ENCODE measurements at regions of chr16 and their contacts with region 1.

Region 1: DNA sequence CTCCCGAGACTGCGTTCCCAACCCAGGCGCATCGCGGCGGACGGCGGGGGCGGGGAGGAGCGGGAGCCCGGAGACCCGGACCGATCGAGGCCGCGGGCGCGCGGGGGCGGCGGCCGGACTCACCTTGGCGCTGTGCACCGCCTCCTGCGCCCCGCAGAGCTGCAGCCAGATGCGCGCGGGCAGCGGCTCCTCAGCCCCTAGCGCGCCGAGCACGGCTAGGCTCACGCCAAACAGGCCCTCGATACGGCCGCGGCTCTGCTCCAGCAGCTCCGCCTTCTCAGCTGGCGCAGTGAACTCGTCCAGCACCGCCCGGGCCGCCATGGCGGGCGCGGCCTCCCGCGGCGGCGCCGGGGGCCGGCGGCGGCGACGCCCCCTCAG is 339 bp downstream of the N4BP1 start:
- DNase-seq: peak; percentile 46
- H3K4me3 Mint-ChIP-seq: no peak overlapping the region
- H3K27ac Mint-ChIP-seq: peak overlapping the region; percentile 100
- H3K4me1 Mint-ChIP-seq: peaks cover 12% of the 10 kb centered on the region
- H3K27me3 Mint-ChIP-seq: no peaks in the 10 kb centered on the region
- CTCF ChIP-seq: no peak

Region 2: DNA sequence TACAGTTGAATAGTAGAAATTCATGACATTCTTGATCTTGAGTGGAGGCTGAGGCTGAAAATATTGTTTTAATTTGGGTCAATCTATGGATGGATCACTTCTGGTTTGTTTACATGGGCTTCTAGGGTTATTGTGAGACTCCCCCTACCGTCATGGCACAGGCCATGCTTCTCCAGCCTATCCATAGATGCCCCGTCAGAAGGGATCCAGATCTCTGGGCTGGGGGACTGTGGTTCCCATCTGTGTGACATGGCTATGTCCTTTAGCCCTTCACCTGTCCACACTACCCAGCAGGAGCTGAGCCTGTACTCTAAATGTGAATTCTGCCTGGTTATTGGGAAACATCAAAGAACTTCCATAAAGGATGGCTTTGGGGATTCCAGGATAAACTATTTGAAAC is 614.3 kb before region 1 on chr16:
- CTCF ChIA-PET with region 1: no interaction called
- POLR2A ChIA-PET with region 1: no interaction called
- intact Hi-C with region 1: no loop called
- DNase-seq: peak; percentile 5
- H3K4me3 Mint-ChIP-seq: no peak overlapping the region
- H3K27ac Mint-ChIP-seq: no peak overlapping the region
- H3K4me1 Mint-ChIP-seq: no peaks in the 10 kb centered on the region
- H3K27me3 Mint-ChIP-seq: no peaks in the 10 kb centered on the region
- CTCF ChIP-seq: no peak

Region 3: DNA sequence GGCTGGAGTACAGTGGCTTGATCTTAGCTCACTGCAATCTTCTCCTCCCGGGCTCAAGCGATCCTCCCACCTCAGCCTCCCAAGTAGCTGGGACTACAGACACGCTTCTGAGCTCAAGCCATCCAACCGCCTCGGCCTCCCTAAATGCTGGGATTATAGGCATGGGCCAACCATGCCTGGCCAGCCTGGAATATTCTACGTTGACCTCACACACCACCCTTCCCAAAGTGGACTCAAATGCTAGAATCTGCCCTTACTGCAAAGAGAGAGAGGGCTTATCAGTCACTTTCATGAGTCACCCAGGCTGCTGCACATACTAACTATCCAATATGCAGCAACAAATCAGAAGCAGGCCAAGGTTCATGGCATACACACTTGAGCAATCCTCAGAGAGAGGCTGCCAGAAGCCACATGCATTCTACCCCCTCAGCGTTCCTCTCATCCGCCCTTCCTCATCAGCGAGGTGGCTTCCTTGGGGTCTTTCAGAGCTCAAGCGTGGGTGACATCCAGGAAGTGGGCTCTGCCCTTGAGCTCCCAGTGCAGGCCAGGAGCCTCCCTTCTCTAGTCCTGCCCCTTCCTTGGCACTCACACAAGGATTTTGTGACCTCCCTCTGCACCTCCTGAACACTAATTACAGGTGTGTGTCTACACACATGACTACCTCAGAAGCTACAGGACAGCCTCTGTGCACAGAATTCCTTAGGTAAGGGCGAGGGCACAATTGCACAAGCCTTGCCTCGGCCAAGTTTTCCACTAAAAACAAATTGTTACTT is 199.6 kb before region 1 on chr16:
- CTCF ChIA-PET with region 1: no interaction called
- POLR2A ChIA-PET with region 1: interaction called, 10 read pairs
- intact Hi-C with region 1: no loop called
- DNase-seq: peak; percentile 91
- H3K4me3 Mint-ChIP-seq: peak overlapping the region; percentile 42
- H3K27ac Mint-ChIP-seq: peak overlapping the region; percentile 71
- H3K4me1 Mint-ChIP-seq: peaks cover 26% of the 10 kb centered on the region
- H3K27me3 Mint-ChIP-seq: no peaks in the 10 kb centered on the region
- CTCF ChIP-seq: no peak

Region 4: DNA sequence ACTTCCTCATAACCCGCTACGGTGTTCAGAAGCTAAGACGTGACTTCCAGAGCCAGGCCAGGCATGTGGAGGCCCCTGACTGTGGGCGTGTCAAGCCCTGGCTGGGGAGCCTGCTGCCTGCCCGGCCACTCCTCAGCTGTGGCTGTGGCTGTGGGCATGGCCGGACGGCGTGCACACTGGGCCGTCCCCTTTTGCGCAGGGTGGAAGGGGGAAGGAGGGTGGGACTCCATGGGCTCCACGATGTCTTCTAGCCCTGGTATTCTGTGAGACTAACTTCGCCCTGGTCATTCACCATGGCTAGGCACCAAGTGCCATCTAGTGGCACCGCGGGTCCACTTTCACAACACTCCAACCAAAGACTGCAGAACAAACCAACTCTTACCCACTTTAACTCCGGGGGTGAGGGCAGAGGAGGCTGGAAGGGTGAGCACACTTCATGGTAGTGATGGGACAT is 67.6 kb before region 1 on chr16:
- CTCF ChIA-PET with region 1: interaction called, 9 read pairs
- POLR2A ChIA-PET with region 1: interaction called, 10 read pairs
- intact Hi-C with region 1: no loop called
- DNase-seq: peak; percentile 47
- H3K4me3 Mint-ChIP-seq: no peak overlapping the region
- H3K27ac Mint-ChIP-seq: peak overlapping the region; percentile 63
- H3K4me1 Mint-ChIP-seq: no peaks in the 10 kb centered on the region
- H3K27me3 Mint-ChIP-seq: no peaks in the 10 kb centered on the region
- CTCF ChIP-seq: peak; percentile 35

Region 5: GRCh38 chr16:48556913-48557351 is 52.7 kb before region 1 on chr16:
- CTCF ChIA-PET with region 1: interaction called, 3 read pairs
- POLR2A ChIA-PET with region 1: interaction called, 46 read pairs
- intact Hi-C with region 1: loop called (anchors 10 kb)
- DNase-seq: peak; percentile 51
- H3K4me3 Mint-ChIP-seq: no peak overlapping the region
- H3K27ac Mint-ChIP-seq: no peak overlapping the region
- H3K4me1 Mint-ChIP-seq: peaks cover 18% of the 10 kb centered on the region
- H3K27me3 Mint-ChIP-seq: no peaks in the 10 kb centered on the region
- CTCF ChIP-seq: no peak

Region 6: GRCh38 chr16:48583075-48584065 is 26.3 kb before region 1 on chr16:
- CTCF ChIA-PET with region 1: no interaction called
- POLR2A ChIA-PET with region 1: interaction called, 10 read pairs
- intact Hi-C with region 1: no loop called
- DNase-seq: no peak
- H3K4me3 Mint-ChIP-seq: no peak overlapping the region
- H3K27ac Mint-ChIP-seq: peak overlapping the region; percentile 17
- H3K4me1 Mint-ChIP-seq: peaks cover 9% of the 10 kb centered on the region
- H3K27me3 Mint-ChIP-seq: no peaks in the 10 kb centered on the region
- CTCF ChIP-seq: no peak

Region 7: GRCh38 chr16:48596326-48596725 is 13.3 kb before region 1 on chr16:
- CTCF ChIA-PET with region 1: interaction called, 3 read pairs
- POLR2A ChIA-PET with region 1: interaction called, 19 read pairs
- intact Hi-C with region 1: no loop called
- DNase-seq: no peak
- H3K4me3 Mint-ChIP-seq: no peak overlapping the region
- H3K27ac Mint-ChIP-seq: no peak overlapping the region
- H3K4me1 Mint-ChIP-seq: peaks cover 14% of the 10 kb centered on the region
- H3K27me3 Mint-ChIP-seq: no peaks in the 10 kb centered on the region
- CTCF ChIP-seq: no peak